Mammary epithelial cell (primary cell): ENCODE measurements at regions of chr18 and their contacts with region 1.

Region 1: GRCh38 chr18:76349067-76349715 is 145.9 kb downstream of the ZNF516 start:
- DNase-seq: peak; percentile 58
- H3K4me3 ChIP-seq: peak overlapping the region in 2 of 3 experiments; percentile 25 to 39
- H3K27ac ChIP-seq: no peak overlapping the region
- H3K4me1 ChIP-seq: peaks cover 18% of the 10 kb centered on the region
- H3K27me3 ChIP-seq: no peaks in the 10 kb centered on the region
- CTCF ChIP-seq: peak; percentile 88 to 90

Region 2: GRCh38 chr18:74623047-74623816 is 1726.0 kb before region 1 on chr18:
- CTCF ChIA-PET with region 1: no interaction called
- dilution Hi-C with region 1: no loop called
- in situ Hi-C with region 1: no loop called
- intact Hi-C with region 1: loop called (anchors 1 kb)
- DNase-seq: no peak
- H3K4me3 ChIP-seq: no peak overlapping the region
- H3K27ac ChIP-seq: no peak overlapping the region
- H3K4me1 ChIP-seq: no peaks in the 10 kb centered on the region
- H3K27me3 ChIP-seq: no peaks in the 10 kb centered on the region
- CTCF ChIP-seq: peak; percentile 33 to 48

Region 3: GRCh38 chr18:76259096-76259495 is 90.1 kb before region 1 on chr18:
- CTCF ChIA-PET with region 1: no interaction called
- dilution Hi-C with region 1: no loop called
- in situ Hi-C with region 1: no loop called
- intact Hi-C with region 1: loop called (anchors 5 kb)
- DNase-seq: no peak
- H3K4me3 ChIP-seq: no peak overlapping the region
- H3K27ac ChIP-seq: no peak overlapping the region
- H3K4me1 ChIP-seq: peaks cover 9% of the 10 kb centered on the region
- H3K27me3 ChIP-seq: no peaks in the 10 kb centered on the region
- CTCF ChIP-seq: no peak

Region 4: GRCh38 chr18:76328140-76328539 is 21.1 kb before region 1 on chr18:
- CTCF ChIA-PET with region 1: no interaction called
- dilution Hi-C with region 1: no loop called
- in situ Hi-C with region 1: no loop called
- intact Hi-C with region 1: no loop called
- DNase-seq: no peak
- H3K4me3 ChIP-seq: no peak overlapping the region
- H3K27ac ChIP-seq: no peak overlapping the region
- H3K4me1 ChIP-seq: no peaks in the 10 kb centered on the region
- H3K27me3 ChIP-seq: no peaks in the 10 kb centered on the region
- CTCF ChIP-seq: no peak

Region 5: GRCh38 chr18:76709659-76710645 is 360.8 kb after region 1 on chr18:
- CTCF ChIA-PET with region 1: no interaction called
- dilution Hi-C with region 1: no loop called
- in situ Hi-C with region 1: no loop called
- intact Hi-C with region 1: loop called (anchors 5 kb)
- DNase-seq: peak; percentile 36
- H3K4me3 ChIP-seq: no peak overlapping the region
- H3K27ac ChIP-seq: no peak overlapping the region
- H3K4me1 ChIP-seq: no peaks in the 10 kb centered on the region
- H3K27me3 ChIP-seq: no peaks in the 10 kb centered on the region
- CTCF ChIP-seq: peak; percentile 86 to 91

Region 6: GRCh38 chr18:77000527-77000926 is 651.3 kb after region 1 on chr18:
- CTCF ChIA-PET with region 1: no interaction called
- dilution Hi-C with region 1: no loop called
- in situ Hi-C with region 1: no loop called
- intact Hi-C with region 1: no loop called
- DNase-seq: peak; percentile 17
- H3K4me3 ChIP-seq: no peak overlapping the region
- H3K27ac ChIP-seq: no peak overlapping the region
- H3K4me1 ChIP-seq: no peaks in the 10 kb centered on the region
- H3K27me3 ChIP-seq: no peaks in the 10 kb centered on the region
- CTCF ChIP-seq: peak; percentile 95 to 97